ENCODE measurements at regions of chr6 and their contacts with region 1.

Region 1: DNA sequence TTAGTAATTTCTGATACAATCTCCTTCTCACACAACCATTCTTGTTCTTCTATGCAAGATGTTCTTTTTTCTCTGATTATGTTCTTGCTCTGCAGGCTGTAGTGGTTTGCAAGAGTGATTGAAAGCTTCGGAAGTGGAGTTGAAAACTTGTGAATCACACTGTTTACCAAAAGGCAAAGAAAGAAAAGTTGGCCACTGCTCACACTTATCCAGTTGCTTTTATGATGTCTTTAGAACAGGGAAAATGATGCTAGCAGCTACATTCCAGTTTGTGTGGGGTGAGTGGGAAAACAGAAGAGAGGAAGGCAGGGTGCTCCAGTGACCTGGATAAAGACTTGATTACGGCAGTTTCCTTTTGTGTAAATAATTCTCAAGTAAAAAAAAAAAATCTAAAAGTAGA is 583.3 kb downstream of the TENT5A start:
- DNase-seq: no peak
- H3K4me3 ChIP-seq: no peak overlapping the region
- H3K27ac ChIP-seq: no peak overlapping the region
- H3K4me1 ChIP-seq: no peaks in the 10 kb centered on the region
- H3K27me3 ChIP-seq: no peaks in the 10 kb centered on the region
- CTCF ChIP-seq: no peak
- POLR2A ChIP-seq: no peak

Region 2: GRCh38 chr6:81144346-81144745 is 24.8 kb before region 1 on chr6:
- intact Hi-C with region 1: loop called (anchors 2 kb)
- DNase-seq: no peak
- H3K4me3 ChIP-seq: no peak overlapping the region
- H3K27ac ChIP-seq: no peak overlapping the region
- H3K4me1 ChIP-seq: no peaks in the 10 kb centered on the region
- H3K27me3 ChIP-seq: no peaks in the 10 kb centered on the region
- CTCF ChIP-seq: no peak
- POLR2A ChIP-seq: no peak

Region 3: GRCh38 chr6:81977486-81977885 is 808.3 kb after region 1 on chr6:
- intact Hi-C with region 1: no loop called
- DNase-seq: no peak
- H3K4me3 ChIP-seq: no peak overlapping the region
- H3K27ac ChIP-seq: no peak overlapping the region
- H3K4me1 ChIP-seq: no peaks in the 10 kb centered on the region
- H3K27me3 ChIP-seq: no peaks in the 10 kb centered on the region
- CTCF ChIP-seq: no peak
- POLR2A ChIP-seq: no peak